Gastrocnemius medialis (tissue), 4 donors: ENCODE measurements at regions of chr5 and their contacts with region 1.

Region 1: DNA sequence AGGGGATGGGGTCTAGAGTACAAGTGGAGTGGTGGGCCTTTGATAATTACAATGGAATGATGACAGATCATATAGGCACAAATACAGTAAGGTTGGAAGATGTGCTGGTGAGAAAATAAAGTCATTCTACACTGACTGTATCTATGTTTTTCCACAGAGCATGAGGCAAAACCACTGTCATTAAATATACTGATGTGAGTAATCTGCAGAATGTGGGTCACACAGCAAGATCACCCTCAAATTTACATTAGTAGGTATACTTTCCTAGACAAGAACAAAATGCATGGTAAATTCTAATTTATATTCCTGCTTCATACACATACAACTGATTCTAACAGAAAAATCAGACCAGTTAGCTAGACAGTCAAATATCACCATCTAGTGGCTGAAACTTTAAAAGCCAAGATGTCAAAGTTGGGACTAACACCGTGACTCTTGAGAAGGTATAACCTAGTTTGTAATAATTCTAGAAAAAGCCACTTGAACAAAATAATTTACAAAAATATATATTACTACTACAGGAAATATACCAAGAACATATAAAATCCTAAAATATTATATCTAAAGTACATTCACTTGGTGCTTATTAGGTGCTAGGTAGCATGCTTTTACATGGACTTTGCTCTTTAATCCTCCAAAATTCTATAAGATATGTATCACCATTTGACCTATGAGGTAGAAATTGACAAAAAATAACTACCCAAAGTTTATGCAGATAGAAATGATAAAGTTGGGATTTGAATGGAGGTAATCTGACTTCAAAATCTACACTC is 19.5 kb downstream of the TTC33 start:
- DNase-seq: no peak
- ATAC-seq: peak; percentile 56 to 68
- H3K4me3 ChIP-seq: no peak overlapping the region
- H3K27ac ChIP-seq: no peak overlapping the region
- H3K4me1 ChIP-seq: peaks cover 14 to 22% of the 10 kb centered on the region in 2 donors
- H3K27me3 ChIP-seq: no peaks in the 10 kb centered on the region
- CTCF ChIP-seq: peak; percentile 30 to 81 (median 69)
- POLR2A ChIP-seq: no peak

Region 2: GRCh38 chr5:39578887-39579497 is 1157.3 kb before region 1 on chr5:
- in situ Hi-C with region 1: no loop called
- intact Hi-C with region 1: loop called (anchors 2 kb)
- DNase-seq: no peak
- ATAC-seq: no peak
- H3K4me3 ChIP-seq: no peak overlapping the region
- H3K27ac ChIP-seq: no peak overlapping the region
- H3K4me1 ChIP-seq: no peaks in the 10 kb centered on the region
- H3K27me3 ChIP-seq: no peaks in the 10 kb centered on the region
- CTCF ChIP-seq: peak; percentile 39 to 69 (median 44)
- POLR2A ChIP-seq: no peak

Region 3: DNA sequence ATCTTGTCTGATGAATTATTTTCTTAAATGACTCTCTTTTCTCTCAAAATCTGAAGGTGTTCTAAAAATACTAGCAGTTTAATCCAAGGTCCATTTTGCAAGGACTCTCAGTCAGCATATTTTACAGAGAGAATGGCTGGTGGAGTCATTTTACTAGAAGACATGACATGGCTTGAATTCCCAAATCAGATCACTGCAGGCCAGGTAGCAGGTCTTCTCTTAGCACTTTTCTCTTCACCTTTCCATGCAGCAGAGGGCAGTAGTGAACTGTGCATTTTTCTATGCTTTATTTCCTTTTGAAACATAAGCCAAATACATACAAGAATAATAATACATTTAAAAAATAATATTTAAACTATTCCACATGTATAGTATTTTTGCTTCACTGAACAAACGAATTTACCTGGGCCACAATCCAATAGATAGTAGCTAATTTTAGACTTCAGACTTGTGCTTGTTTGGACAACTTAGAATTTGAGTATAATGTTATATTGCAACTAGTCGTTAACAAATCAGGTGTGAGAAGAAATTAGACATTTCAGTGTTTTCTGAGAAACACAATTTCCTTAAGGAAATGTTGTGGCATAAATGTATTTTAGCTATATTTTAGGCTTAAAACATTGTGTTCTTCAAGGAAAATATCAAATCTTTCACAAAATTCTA is 1022.1 kb before region 1 on chr5:
- in situ Hi-C with region 1: loop called in 1 of 4 experiments (anchors 25 kb)
- intact Hi-C with region 1: no loop called
- DNase-seq: peak in 1 of 2 donors; percentile 18
- ATAC-seq: peak; percentile 52 to 64
- H3K4me3 ChIP-seq: no peak overlapping the region
- H3K27ac ChIP-seq: peak overlapping the region; percentile 27 to 52 (median 48)
- H3K4me1 ChIP-seq: peaks cover 21 to 28% of the 10 kb centered on the region in 2 donors
- H3K27me3 ChIP-seq: no peaks in the 10 kb centered on the region
- CTCF ChIP-seq: peak in 4 of 5 experiments; percentile 44 to 65 (median 60)
- POLR2A ChIP-seq: no peak

Region 4: DNA sequence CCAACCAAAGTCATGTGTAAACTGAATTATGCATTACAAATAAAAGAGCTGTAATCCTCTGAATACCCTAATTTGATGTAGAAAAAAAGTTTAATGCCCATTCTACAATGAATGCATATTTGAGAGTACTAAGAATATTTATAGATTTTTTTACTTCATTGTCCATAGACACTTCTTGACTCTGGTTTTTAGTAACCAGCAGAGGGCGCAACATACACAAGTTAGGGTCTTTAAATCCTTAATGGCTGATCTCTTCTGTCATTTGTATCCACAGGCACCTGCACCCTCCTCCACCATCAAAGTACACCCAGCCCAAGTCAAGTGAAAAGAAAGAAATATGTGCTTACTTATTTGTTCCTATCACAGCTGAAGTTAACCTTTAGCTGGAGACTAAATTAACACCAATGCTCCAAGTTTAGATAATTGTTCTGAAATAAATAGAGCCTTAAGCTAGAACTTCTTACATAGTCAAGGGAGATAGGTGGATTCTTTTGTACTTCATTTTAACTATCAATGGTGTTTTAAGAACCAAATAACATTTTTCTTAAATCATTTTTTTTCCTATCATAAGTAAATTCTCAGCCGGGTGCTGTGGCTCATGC is 787.3 kb before region 1 on chr5:
- in situ Hi-C with region 1: no loop called
- intact Hi-C with region 1: loop called (anchors 2 kb)
- DNase-seq: peak; percentile 13 to 14
- ATAC-seq: peak in 1 of 2 donors; percentile 55
- H3K4me3 ChIP-seq: no peak overlapping the region
- H3K27ac ChIP-seq: no peak overlapping the region
- H3K4me1 ChIP-seq: no peaks in the 10 kb centered on the region
- H3K27me3 ChIP-seq: no peaks in the 10 kb centered on the region
- CTCF ChIP-seq: peak in 4 of 5 experiments; percentile 39 to 58 (median 46)
- POLR2A ChIP-seq: no peak

Region 5: DNA sequence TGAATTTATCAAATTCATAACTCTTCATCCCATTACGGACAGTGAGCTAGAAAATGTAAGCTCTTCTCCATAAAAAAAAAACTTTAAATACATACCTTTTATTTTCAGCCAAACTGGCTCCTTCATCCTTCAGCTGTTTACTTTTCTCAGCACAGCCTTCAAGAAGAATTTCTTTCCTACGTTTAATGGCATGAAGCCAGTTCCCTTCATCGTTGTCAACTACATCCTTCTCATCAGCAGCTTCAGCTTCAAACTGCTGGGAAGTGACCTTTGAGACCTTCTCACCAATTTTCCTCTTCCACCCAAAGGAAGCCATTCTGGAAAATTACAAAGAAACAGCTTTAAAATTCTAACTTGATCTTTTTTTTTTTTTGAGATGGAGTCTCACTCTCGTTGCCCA is 10.4 kb after region 1 on chr5:
- in situ Hi-C with region 1: no loop called
- intact Hi-C with region 1: no loop called
- DNase-seq: no peak
- ATAC-seq: no peak
- H3K4me3 ChIP-seq: no peak overlapping the region
- H3K27ac ChIP-seq: no peak overlapping the region
- H3K4me1 ChIP-seq: peaks cover 24 to 26% of the 10 kb centered on the region in 2 donors
- H3K27me3 ChIP-seq: no peaks in the 10 kb centered on the region
- CTCF ChIP-seq: no peak
- POLR2A ChIP-seq: no peak

Region 6: GRCh38 chr5:40871177-40871576 is 134.9 kb after region 1 on chr5:
- in situ Hi-C with region 1: no loop called
- intact Hi-C with region 1: no loop called
- DNase-seq: no peak
- ATAC-seq: no peak
- H3K4me3 ChIP-seq: no peak overlapping the region
- H3K27ac ChIP-seq: no peak overlapping the region
- H3K4me1 ChIP-seq: no peaks in the 10 kb centered on the region
- H3K27me3 ChIP-seq: no peaks in the 10 kb centered on the region
- CTCF ChIP-seq: no peak
- POLR2A ChIP-seq: no peak